CD4-positive, alpha-beta memory T cell (primary cell): ENCODE measurements at regions of chr10 and their contacts with region 1.

Region 1: GRCh38 chr10:67788025-67788886 is 49.7 kb downstream of the DNAJC12 start:
- DNase-seq: peak; percentile 53 to 64 (median 56)
- H3K4me3 ChIP-seq: no peak overlapping the region
- H3K4me3 Mint-ChIP-seq: peak overlapping the region in 4 of 8 donors; percentile 8 to 70 (median 53)
- H3K27ac ChIP-seq: no peak overlapping the region
- H3K27ac Mint-ChIP-seq: peak overlapping the region in 4 of 7 donors; percentile 2 to 80 (median 15)
- H3K4me1 ChIP-seq: peaks cover 40% of the 10 kb centered on the region
- H3K4me1 Mint-ChIP-seq: peaks cover 25 to 40% (median 30%) of the 10 kb centered on the region in 4 donors
- H3K27me3 ChIP-seq: no peaks in the 10 kb centered on the region
- H3K27me3 Mint-ChIP-seq: no peaks in the 10 kb centered on the region

Region 2: GRCh38 chr10:67171970-67172369 is 616.3 kb before region 1 on chr10:
- CTCF ChIA-PET with region 1: no interaction called
- POLR2A ChIA-PET with region 1: no interaction called
- intact Hi-C with region 1: no loop called
- DNase-seq: no peak
- H3K4me3 ChIP-seq: no peak overlapping the region
- H3K4me3 Mint-ChIP-seq: no peak overlapping the region
- H3K27ac ChIP-seq: no peak overlapping the region
- H3K27ac Mint-ChIP-seq: no peak overlapping the region
- H3K4me1 ChIP-seq: no peaks in the 10 kb centered on the region
- H3K4me1 Mint-ChIP-seq: no peaks in the 10 kb centered on the region
- H3K27me3 ChIP-seq: no peaks in the 10 kb centered on the region
- H3K27me3 Mint-ChIP-seq: no peaks in the 10 kb centered on the region

Region 3: GRCh38 chr10:67772894-67773511 is 15.3 kb before region 1 on chr10:
- CTCF ChIA-PET with region 1: interaction called, 41 read pairs
- POLR2A ChIA-PET with region 1: no interaction called
- intact Hi-C with region 1: no loop called
- DNase-seq: no peak
- H3K4me3 ChIP-seq: no peak overlapping the region
- H3K4me3 Mint-ChIP-seq: no peak overlapping the region
- H3K27ac ChIP-seq: no peak overlapping the region
- H3K27ac Mint-ChIP-seq: peak overlapping the region in 2 of 7 donors; percentile 22 to 26
- H3K4me1 ChIP-seq: no peaks in the 10 kb centered on the region
- H3K4me1 Mint-ChIP-seq: peaks cover 0 to 2% (median 0%) of the 10 kb centered on the region in 4 donors
- H3K27me3 ChIP-seq: no peaks in the 10 kb centered on the region
- H3K27me3 Mint-ChIP-seq: no peaks in the 10 kb centered on the region

Region 4: GRCh38 chr10:67849331-67850011 is 61.2 kb after region 1 on chr10:
- CTCF ChIA-PET with region 1: interaction called, 30 read pairs
- POLR2A ChIA-PET with region 1: no interaction called
- intact Hi-C with region 1: no loop called
- DNase-seq: peak; percentile 87 to 93 (median 90)
- H3K4me3 ChIP-seq: peak overlapping the region; percentile 70 to 98
- H3K4me3 Mint-ChIP-seq: peak overlapping the region; percentile 90 to 99 (median 96)
- H3K27ac ChIP-seq: peak overlapping the region; percentile 85
- H3K27ac Mint-ChIP-seq: peak overlapping the region; percentile 85 to 99 (median 97)
- H3K4me1 ChIP-seq: peaks cover 8% of the 10 kb centered on the region
- H3K4me1 Mint-ChIP-seq: peaks cover 2 to 17% (median 7%) of the 10 kb centered on the region in 4 donors
- H3K27me3 ChIP-seq: no peaks in the 10 kb centered on the region
- H3K27me3 Mint-ChIP-seq: no peaks in the 10 kb centered on the region

Region 5: GRCh38 chr10:68208424-68209042 is 420.3 kb after region 1 on chr10:
- CTCF ChIA-PET with region 1: interaction called, 4 read pairs
- POLR2A ChIA-PET with region 1: no interaction called
- intact Hi-C with region 1: loop called (anchors 1 kb)
- DNase-seq: no peak
- H3K4me3 ChIP-seq: no peak overlapping the region
- H3K4me3 Mint-ChIP-seq: no peak overlapping the region
- H3K27ac ChIP-seq: no peak overlapping the region
- H3K27ac Mint-ChIP-seq: peak overlapping the region in 1 of 7 donors; percentile 42
- H3K4me1 ChIP-seq: no peaks in the 10 kb centered on the region
- H3K4me1 Mint-ChIP-seq: no peaks in the 10 kb centered on the region
- H3K27me3 ChIP-seq: no peaks in the 10 kb centered on the region
- H3K27me3 Mint-ChIP-seq: peaks cover 10 to 12% of the 10 kb centered on the region in 2 donors

Region 6: GRCh38 chr10:68348265-68348741 is 560.0 kb after region 1 on chr10:
- CTCF ChIA-PET with region 1: interaction called, 10 read pairs
- POLR2A ChIA-PET with region 1: no interaction called
- intact Hi-C with region 1: no loop called
- DNase-seq: peak; percentile 42 to 58 (median 49)
- H3K4me3 ChIP-seq: no peak overlapping the region
- H3K4me3 Mint-ChIP-seq: no peak overlapping the region
- H3K27ac ChIP-seq: no peak overlapping the region
- H3K27ac Mint-ChIP-seq: peak overlapping the region; percentile 4 to 85 (median 79)
- H3K4me1 ChIP-seq: no peaks in the 10 kb centered on the region
- H3K4me1 Mint-ChIP-seq: peaks cover 2 to 8% (median 5%) of the 10 kb centered on the region in 4 donors
- H3K27me3 ChIP-seq: no peaks in the 10 kb centered on the region
- H3K27me3 Mint-ChIP-seq: no peaks in the 10 kb centered on the region